Heart right ventricle (tissue), 16 donors: ENCODE measurements at regions of chr17 and their contacts with region 1.

Region 1: GRCh38 chr17:65556014-65556909 is 5.2 kb downstream of the AXIN2 start:
- DNase-seq: peak; percentile 77 to 80
- ATAC-seq: peak in 6 of 8 donors; percentile 14 to 39 (median 28)
- H3K4me3 ChIP-seq: peak overlapping the region in 3 of 10 donors; percentile 8 to 16 (median 16)
- H3K27ac ChIP-seq: peak overlapping the region in 2 of 10 donors; percentile 48 to 68
- H3K4me1 ChIP-seq: peaks cover 0 to 43% (median 18%) of the 10 kb centered on the region in 9 donors
- H3K27me3 ChIP-seq: peaks cover 0 to 39% (median 0%) of the 10 kb centered on the region in 7 donors
- CTCF ChIP-seq: peak; percentile 50 to 83 (median 72)

Region 2: DNA sequence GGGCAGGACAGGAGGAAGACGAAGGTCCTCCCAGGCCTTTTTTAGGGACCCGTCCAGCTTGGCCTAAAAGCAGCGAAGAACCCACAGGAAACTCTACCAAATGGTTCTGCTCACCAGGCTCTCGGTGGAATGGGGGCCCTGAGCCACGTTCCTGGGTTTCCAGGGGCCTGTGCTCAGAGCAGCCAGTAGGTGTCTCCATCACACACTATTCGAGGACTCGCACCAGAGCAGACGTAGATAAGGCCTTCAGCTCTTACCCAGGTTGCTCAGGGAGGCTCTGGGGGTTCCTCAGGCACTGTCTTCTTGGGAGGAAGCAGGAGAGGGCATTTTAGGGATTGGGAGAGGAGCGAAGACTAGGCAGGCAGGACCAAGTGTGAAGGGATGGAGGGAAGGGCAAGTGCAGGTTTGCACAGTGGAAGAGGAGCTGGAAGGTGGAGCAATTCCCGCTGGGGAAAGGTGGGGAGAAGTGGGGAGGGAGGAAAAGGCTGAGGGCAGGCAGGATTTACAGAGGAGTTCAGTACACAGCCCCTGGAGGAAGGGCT is 262.0 kb before region 1 on chr17:
- intact Hi-C with region 1: loop called in 5 of 10 experiments (anchors 5 to 10 kb)
- DNase-seq: peak; percentile 28 to 30
- ATAC-seq: peak; percentile 71 to 92 (median 82)
- H3K4me3 ChIP-seq: no peak overlapping the region
- H3K27ac ChIP-seq: no peak overlapping the region
- H3K4me1 ChIP-seq: peaks cover 0 to 6% (median 0%) of the 10 kb centered on the region in 9 donors
- H3K27me3 ChIP-seq: peaks cover 0 to 5% (median 0%) of the 10 kb centered on the region in 7 donors
- CTCF ChIP-seq: peak; percentile 29 to 81 (median 73)

Region 3: GRCh38 chr17:65455972-65456343 is 100.3 kb before region 1 on chr17:
- intact Hi-C with region 1: loop called in 6 of 10 experiments (anchors 2 to 5 kb)
- DNase-seq: peak in 1 of 2 donors; percentile 21
- ATAC-seq: peak; percentile 72 to 95 (median 84)
- H3K4me3 ChIP-seq: peak overlapping the region in 1 of 10 donors; percentile 13
- H3K27ac ChIP-seq: peak overlapping the region in 7 of 10 donors; percentile 23 to 78 (median 52)
- H3K4me1 ChIP-seq: peaks cover 0 to 14% (median 4%) of the 10 kb centered on the region in 9 donors
- H3K27me3 ChIP-seq: peaks cover 0 to 3% (median 0%) of the 10 kb centered on the region in 7 donors
- CTCF ChIP-seq: peak in 8 of 9 donors; percentile 8 to 61 (median 44)

Region 4: GRCh38 chr17:65463242-65463641 is 93.0 kb before region 1 on chr17:
- intact Hi-C with region 1: loop called in 7 of 10 experiments (anchors 2 to 5 kb)
- DNase-seq: peak; percentile 50 to 66
- ATAC-seq: peak; percentile 86 to 99 (median 96)
- H3K4me3 ChIP-seq: no peak overlapping the region
- H3K27ac ChIP-seq: peak overlapping the region; percentile 43 to 86 (median 66)
- H3K4me1 ChIP-seq: peaks cover 0 to 8% (median 0%) of the 10 kb centered on the region in 9 donors
- H3K27me3 ChIP-seq: peaks cover 0 to 3% (median 0%) of the 10 kb centered on the region in 7 donors
- CTCF ChIP-seq: no peak

Region 5: DNA sequence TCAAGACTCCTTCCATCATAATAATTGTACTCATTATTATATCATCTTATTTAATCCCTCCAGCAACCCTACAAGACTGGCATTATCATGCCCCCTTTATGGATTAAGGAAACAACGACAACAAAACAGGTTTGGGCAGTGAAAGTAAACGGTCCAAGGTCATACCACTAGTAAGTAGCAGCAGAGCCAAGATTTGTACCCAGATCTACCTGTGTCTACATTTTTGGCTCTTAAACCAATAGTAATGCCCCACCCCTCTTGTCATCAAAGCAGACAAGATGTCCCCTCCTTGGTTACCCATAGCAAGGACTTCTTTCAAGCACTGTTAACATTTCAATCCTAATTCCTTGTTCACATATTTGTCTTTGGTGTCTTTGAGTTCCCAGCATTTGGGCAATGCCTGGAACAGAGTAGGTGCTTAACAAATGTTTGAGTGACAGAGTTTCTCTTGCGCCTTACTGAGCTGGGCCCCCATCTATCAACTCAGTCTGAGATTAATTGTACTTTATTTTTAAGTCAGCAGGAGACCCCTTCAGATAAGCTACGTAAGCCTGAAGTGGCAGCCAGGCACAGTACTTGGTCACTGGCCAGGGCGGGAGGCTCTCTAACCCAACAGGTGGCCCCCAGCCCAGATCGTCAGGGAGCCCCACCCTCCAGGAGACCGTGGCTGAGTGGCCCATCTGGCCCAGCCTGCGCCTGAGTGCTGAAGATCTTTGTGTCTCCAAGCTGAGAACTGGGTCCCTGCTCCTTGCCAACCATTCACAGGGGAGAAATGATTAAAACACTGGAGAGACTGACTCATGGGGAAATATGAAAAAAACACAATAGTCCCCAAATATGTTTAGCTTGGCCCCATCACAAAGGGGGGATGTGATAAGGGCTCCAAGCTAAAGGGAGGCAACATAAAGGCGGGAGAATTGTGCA is 70.6 kb before region 1 on chr17:
- intact Hi-C with region 1: no loop called
- DNase-seq: peak in 1 of 2 donors; percentile 74
- ATAC-seq: peak in 7 of 8 donors; percentile 46 to 90 (median 75)
- H3K4me3 ChIP-seq: no peak overlapping the region
- H3K27ac ChIP-seq: no peak overlapping the region
- H3K4me1 ChIP-seq: peaks cover 0 to 5% (median 0%) of the 10 kb centered on the region in 9 donors
- H3K27me3 ChIP-seq: peaks cover 0 to 6% (median 0%) of the 10 kb centered on the region in 7 donors
- CTCF ChIP-seq: no peak

Region 6: DNA sequence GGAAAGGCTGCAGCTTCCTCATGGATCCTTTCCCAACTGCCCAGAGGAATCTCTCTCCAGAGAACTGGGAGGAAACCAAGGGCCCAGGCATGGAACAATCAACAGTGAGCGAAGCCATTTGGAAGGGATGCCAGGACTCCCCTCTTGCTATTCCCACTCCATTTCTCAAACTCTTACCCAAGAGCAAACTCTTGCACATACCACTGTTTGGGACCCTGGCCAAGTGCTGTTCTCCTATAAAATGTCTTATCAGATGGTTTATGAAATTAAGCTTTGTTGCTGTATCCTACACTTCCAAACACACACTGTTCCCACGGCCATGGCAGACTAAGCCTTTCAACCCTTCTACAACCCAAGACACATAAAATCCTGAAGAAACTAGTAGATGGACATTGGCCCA is 53.5 kb after region 1 on chr17:
- intact Hi-C with region 1: no loop called
- DNase-seq: no peak
- ATAC-seq: no peak
- H3K4me3 ChIP-seq: no peak overlapping the region
- H3K27ac ChIP-seq: no peak overlapping the region
- H3K4me1 ChIP-seq: peaks cover 0 to 4% (median 0%) of the 10 kb centered on the region in 9 donors
- H3K27me3 ChIP-seq: no peaks in the 10 kb centered on the region
- CTCF ChIP-seq: no peak